ENCODE measurements at regions of chr12 and their contacts with region 1.

Region 1: DNA sequence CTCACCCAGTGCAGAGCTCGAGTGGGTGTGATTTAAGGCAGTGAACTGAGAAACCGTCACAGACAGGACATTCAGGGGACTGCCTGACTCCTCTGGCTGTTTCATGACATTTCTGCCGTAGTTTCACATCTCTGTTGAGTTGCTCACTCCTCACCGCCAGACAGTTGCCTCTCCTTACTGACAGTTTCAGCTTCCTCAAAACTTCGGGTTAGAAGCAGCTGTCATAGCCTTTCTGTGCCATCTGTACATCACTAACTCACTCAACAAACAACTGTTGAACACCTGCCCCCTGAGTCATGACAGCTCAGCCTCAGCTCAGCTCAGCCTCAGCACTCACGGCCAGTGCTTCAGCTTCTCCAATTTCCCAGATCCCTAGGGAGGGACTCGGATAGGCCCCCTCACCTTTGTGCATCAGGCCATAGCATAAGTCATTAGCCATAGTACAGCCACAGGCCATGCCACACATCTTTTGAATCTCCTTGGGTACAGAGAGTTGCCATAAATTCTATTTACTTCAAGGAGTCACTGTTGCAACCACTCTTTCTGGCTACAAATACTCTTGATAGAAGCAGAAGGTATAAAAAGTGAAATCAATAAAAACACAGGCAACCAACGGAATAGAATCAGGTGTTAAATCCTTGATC is 6.2 kb upstream of the SLC15A4 start:
- DNase-seq: peak; percentile 91
- ATAC-seq: peak; percentile 88
- H3K4me3 ChIP-seq: peak overlapping the region in 4 of 5 experiments; percentile 13 to 50 (median 20)
- H3K4me3 Mint-ChIP-seq: peak overlapping the region; percentile 76
- H3K27ac ChIP-seq: peak overlapping the region; percentile 88 to 92
- H3K27ac Mint-ChIP-seq: peak overlapping the region; percentile 94
- H3K4me1 ChIP-seq: peaks cover 28 to 33% of the 10 kb centered on the region in 2 donors
- H3K4me1 Mint-ChIP-seq: peaks cover 27% of the 10 kb centered on the region
- H3K27me3 ChIP-seq: no peaks in the 10 kb centered on the region
- H3K27me3 Mint-ChIP-seq: no peaks in the 10 kb centered on the region
- CTCF ChIP-seq: no peak

Region 2: DNA sequence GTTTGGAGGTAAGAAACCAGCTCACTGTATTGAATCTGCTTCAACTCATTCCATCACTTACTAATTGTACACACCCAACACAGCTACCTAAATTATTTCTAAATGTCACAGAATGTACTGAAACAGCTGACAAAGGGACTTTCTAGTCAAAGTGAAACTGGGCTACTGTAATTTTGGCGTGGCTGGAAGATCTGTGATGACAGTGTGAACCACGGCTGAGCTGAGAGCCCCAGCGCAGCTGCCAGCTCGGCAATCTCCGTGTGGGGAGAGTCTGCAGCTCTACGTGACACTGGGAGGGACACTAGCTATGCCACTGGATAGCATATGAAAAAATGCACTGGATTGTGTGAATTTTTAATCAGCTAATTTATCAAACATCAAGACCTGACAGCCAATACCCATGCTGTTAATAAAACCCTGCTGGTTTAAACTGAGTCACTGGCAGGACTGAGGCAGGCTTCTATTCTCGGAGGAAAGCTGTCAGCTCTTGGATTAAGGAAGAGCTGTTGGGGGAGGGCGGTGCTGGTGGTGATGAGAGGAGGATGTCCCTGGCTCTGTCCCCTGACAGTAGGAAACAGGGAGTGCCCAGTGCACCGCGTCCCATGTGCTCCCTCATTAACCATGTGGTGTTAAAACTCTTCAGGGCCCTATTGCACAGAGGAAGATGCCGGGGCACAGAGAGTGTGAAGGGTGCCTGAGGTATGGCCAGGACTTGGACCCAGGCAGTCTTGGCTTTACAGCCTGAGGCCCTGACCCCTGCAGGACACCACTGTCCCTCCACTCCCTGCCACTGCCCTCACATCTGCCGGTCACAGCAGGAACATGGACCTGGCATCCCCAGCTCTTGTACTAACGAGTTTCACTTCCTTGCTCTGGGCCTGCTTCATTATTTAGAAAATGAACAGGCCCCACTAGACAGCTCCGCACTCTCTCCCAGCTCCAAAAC is 19.5 kb before region 1 on chr12:
- CTCF ChIA-PET with region 1: interaction called, 26 read pairs
- POLR2A ChIA-PET with region 1: interaction called, 8 read pairs
- intact Hi-C with region 1: loop called (anchors 1 kb)
- DNase-seq: peak; percentile 74
- ATAC-seq: peak; percentile 90
- H3K4me3 ChIP-seq: peak overlapping the region in 2 of 5 experiments; percentile 3 to 7
- H3K4me3 Mint-ChIP-seq: peak overlapping the region; percentile 66
- H3K27ac ChIP-seq: peak overlapping the region; percentile 63 to 73
- H3K27ac Mint-ChIP-seq: peak overlapping the region; percentile 85
- H3K4me1 ChIP-seq: peaks cover 43 to 47% of the 10 kb centered on the region in 2 donors
- H3K4me1 Mint-ChIP-seq: peaks cover 56% of the 10 kb centered on the region
- H3K27me3 ChIP-seq: no peaks in the 10 kb centered on the region
- H3K27me3 Mint-ChIP-seq: no peaks in the 10 kb centered on the region
- CTCF ChIP-seq: no peak